Activated B cell treated with CpG ODN at 0.5 μM for 24 hours (primary cell): ENCODE measurements at regions of chr2 and their contacts with region 1.

Region 1: DNA sequence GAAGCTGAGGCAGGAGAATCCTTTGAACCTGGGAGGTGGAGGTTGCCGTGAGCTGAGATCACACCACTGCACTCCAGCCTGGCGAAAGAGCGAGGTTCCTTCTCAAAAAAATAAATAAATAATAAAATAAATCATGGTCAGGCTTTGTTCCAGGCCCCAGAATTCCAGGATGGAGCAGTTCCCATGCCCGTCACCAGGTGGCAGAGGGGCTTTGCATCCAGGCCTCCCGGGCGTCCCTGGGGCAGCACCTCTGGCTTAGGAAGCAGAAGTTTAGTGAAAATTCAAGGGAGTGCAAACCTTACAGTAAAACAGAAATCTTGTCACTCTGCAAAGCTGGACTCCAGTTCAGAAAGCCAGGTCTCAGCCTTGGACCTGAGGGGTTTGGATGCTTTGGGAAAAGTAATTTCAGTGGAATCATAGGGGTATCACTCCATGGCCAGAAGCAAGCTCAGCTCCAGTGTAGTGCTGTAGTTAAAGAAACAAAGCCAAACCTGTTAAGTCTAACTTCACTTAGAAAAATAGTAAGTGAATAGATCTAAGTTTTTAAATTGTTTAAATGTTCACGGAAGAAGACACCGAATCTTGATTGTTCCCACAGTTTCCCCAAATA is 512.7 kb downstream of the CMPK2 start:
- DNase-seq: no peak
- ATAC-seq: no peak
- H3K4me3 Mint-ChIP-seq: no peak overlapping the region
- H3K27ac Mint-ChIP-seq: peak overlapping the region; percentile 35
- H3K4me1 Mint-ChIP-seq: peaks cover 34% of the 10 kb centered on the region
- H3K27me3 Mint-ChIP-seq: no peaks in the 10 kb centered on the region
- CTCF ChIP-seq: no peak

Region 2: DNA sequence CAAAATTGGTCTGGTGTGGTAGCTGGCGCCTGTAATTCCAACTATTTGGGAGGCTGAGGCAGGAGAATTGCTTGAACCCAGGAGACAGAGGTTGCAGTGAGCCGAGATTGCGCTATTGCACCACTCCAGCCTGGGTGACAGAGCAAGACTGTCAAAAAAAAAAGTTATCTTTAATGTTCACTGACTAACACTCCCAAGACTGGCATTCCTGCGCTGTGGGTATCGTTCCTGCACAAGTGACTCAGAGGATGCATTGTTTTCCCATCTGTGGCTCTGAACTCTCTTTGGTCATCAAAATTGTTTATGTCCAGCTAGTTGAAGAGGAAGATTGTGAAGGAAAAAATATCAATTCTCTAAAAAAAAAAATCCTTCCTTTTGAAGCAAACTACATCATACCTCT is 121.8 kb before region 1 on chr2:
- CTCF ChIA-PET with region 1: no interaction called
- POLR2A ChIA-PET with region 1: no interaction called
- intact Hi-C with region 1: loop called (anchors 5 kb)
- DNase-seq: no peak
- ATAC-seq: no peak
- H3K4me3 Mint-ChIP-seq: no peak overlapping the region
- H3K27ac Mint-ChIP-seq: no peak overlapping the region
- H3K4me1 Mint-ChIP-seq: peaks cover 14% of the 10 kb centered on the region
- H3K27me3 Mint-ChIP-seq: no peaks in the 10 kb centered on the region
- CTCF ChIP-seq: no peak

Region 3: GRCh38 chr2:8003462-8004075 is 1650.6 kb after region 1 on chr2:
- CTCF ChIA-PET with region 1: no interaction called
- POLR2A ChIA-PET with region 1: no interaction called
- intact Hi-C with region 1: no loop called
- DNase-seq: no peak
- ATAC-seq: no peak
- H3K4me3 Mint-ChIP-seq: no peak overlapping the region
- H3K27ac Mint-ChIP-seq: no peak overlapping the region
- H3K4me1 Mint-ChIP-seq: no peaks in the 10 kb centered on the region
- H3K27me3 Mint-ChIP-seq: peaks cover 6% of the 10 kb centered on the region
- CTCF ChIP-seq: no peak